Lower leg skin (tissue), 4 donors: ENCODE measurements at regions of chr6 and their contacts with region 1.

Region 1: DNA sequence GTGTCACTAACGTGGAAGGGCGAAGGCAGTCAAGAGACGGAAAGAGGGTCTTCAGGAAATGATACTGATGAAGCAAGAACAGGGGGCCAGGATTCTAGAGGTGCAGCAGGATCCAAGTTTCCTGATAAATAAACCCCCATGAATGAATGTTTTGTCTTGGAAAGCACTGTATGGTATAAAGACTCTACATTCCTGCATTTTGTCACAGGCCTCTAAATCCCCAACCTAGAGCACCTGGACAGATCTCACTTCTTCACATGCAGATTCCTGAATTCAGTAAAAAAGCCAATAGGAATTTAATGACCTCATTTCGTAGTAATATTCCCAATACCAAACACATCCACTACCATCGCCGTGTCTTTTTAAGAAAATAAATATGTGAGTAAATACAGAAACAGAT is 577.8 kb downstream of the PRKN start:
- DNase-seq: no peak
- H3K4me3 ChIP-seq: no peak overlapping the region
- CTCF ChIP-seq: no peak
- POLR2A ChIP-seq: no peak

Region 2: DNA sequence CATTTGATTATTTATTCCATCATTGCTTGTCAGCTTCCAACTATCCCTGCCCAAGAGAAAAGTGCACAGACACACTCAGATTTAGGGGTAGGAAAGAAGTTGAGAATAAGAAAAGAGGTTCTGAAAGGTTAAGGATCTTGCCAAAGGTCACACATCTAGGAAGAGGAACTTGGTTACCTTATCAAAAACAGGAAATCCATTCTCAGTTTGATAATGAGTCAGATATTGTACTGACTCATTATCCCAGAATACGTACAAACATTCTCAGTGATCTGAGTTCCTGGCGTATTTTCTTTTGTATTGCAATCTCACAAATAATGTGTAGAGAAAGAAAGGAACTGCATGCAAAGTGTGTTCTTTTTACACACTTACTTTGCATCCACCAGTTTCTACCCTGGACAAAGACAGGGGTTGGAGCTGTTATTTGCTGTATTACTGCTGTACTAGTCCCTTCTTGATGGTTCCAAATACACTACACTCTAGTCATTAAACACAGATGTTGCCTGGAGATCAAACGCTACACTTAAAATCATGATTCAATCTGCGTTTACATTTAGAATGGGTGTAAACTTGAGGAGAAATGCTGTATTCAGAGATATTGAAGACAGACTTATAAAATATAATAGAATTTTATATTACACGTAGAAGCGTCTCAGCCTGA is 32.1 kb after region 1 on chr6:
- intact Hi-C with region 1: loop called (anchors 1 kb)
- DNase-seq: no peak
- H3K4me3 ChIP-seq: no peak overlapping the region
- CTCF ChIP-seq: no peak
- POLR2A ChIP-seq: no peak

Region 3: DNA sequence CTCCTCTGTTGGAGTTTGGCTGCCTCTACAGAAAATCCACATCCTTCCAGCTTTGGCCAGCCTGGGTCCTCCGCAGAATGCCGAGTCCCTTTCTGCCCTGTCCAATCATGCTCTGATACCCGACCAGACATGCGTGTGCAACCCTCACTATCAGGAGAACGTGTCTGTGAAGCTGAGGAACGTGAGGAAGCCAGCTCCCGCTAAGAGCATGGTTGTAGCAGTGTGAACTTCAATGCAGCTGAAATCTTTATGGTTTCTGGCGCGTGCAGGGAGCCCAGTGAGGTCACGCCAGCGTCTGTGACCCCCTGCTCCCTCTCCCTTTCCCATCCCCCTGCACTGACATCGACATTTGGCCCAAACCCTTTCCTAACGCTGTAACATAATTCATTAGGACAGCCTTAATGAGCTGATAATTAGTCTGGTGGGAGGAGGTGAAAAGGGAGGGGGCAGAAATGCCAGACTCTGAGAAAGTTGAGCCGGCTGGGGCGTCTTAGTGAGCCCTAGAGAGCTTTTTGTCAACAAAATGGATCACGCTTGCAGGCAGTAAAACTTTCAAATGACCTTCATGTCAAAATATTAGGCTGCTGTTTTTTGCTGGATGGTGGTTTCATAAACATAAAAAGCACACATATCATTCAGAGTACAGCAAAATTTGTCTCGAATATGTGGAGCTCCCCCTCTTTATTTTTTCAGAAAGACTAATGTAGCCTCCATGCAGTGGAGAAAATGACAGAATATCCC is 1688.1 kb after region 1 on chr6:
- intact Hi-C with region 1: no loop called
- DNase-seq: no peak
- H3K4me3 ChIP-seq: no peak overlapping the region
- CTCF ChIP-seq: no peak
- POLR2A ChIP-seq: no peak